ENCODE measurements at regions of chr4 and their contacts with region 1.

Region 1: GRCh38 chr4:108109997-108110416 is 58.7 kb downstream of the LEF1 start:
- DNase-seq: peak in 1 of 14 experiments; percentile 10
- ATAC-seq: no peak
- H3K4me3 ChIP-seq: peak overlapping the region; percentile 2
- H3K4me3 Mint-ChIP-seq: peak overlapping the region; percentile 73
- H3K27ac ChIP-seq: peak overlapping the region; percentile 48 to 89
- H3K27ac Mint-ChIP-seq: peak overlapping the region; percentile 92
- H3K4me1 ChIP-seq: peaks cover 85% of the 10 kb centered on the region
- H3K4me1 Mint-ChIP-seq: peaks cover 95% of the 10 kb centered on the region
- H3K27me3 ChIP-seq: no peaks in the 10 kb centered on the region
- H3K27me3 Mint-ChIP-seq: no peaks in the 10 kb centered on the region
- CTCF ChIP-seq: no peak

Region 2: GRCh38 chr4:107863850-107864371 is 246.1 kb before region 1 on chr4:
- CTCF ChIA-PET with region 1: no interaction called
- POLR2A ChIA-PET with region 1: no interaction called
- intact Hi-C with region 1: no loop called
- DNase-seq: no peak
- ATAC-seq: no peak
- H3K4me3 ChIP-seq: no peak overlapping the region
- H3K4me3 Mint-ChIP-seq: no peak overlapping the region
- H3K27ac ChIP-seq: no peak overlapping the region
- H3K27ac Mint-ChIP-seq: no peak overlapping the region
- H3K4me1 ChIP-seq: no peaks in the 10 kb centered on the region
- H3K4me1 Mint-ChIP-seq: no peaks in the 10 kb centered on the region
- H3K27me3 ChIP-seq: peaks cover 2 to 13% of the 10 kb centered on the region in 2 experiments
- H3K27me3 Mint-ChIP-seq: peaks cover 5% of the 10 kb centered on the region
- CTCF ChIP-seq: no peak

Region 3: DNA sequence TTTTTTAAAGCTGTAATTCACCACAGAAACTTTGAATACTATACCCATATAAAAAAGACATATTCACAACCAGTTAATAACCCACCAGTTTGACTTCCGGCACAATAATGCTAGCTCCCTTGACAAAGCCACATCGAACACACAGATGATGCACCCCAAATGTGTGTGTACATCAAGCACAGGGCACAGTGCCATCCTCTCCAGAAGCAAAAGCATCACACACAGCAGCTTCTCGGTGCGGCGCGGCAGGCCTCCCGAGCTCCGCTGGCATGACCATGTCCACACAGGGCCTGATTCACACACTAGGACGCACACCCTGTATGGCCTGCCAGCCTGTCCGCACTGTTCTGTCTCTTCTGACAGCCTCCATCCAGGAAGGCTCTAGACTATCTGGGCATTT is 29.3 kb before region 1 on chr4:
- CTCF ChIA-PET with region 1: interaction called, 8 read pairs
- POLR2A ChIA-PET with region 1: interaction called, 29 read pairs
- intact Hi-C with region 1: loop called (anchors 2 kb)
- DNase-seq: peak; percentile 35 to 77 (median 62)
- ATAC-seq: peak; percentile 84
- H3K4me3 ChIP-seq: no peak overlapping the region
- H3K4me3 Mint-ChIP-seq: peak overlapping the region; percentile 77
- H3K27ac ChIP-seq: peak overlapping the region in 1 of 2 donors; percentile 68
- H3K27ac Mint-ChIP-seq: peak overlapping the region; percentile 95
- H3K4me1 ChIP-seq: peaks cover 14% of the 10 kb centered on the region
- H3K4me1 Mint-ChIP-seq: peaks cover 78% of the 10 kb centered on the region
- H3K27me3 ChIP-seq: no peaks in the 10 kb centered on the region
- H3K27me3 Mint-ChIP-seq: no peaks in the 10 kb centered on the region
- CTCF ChIP-seq: no peak

Region 4: DNA sequence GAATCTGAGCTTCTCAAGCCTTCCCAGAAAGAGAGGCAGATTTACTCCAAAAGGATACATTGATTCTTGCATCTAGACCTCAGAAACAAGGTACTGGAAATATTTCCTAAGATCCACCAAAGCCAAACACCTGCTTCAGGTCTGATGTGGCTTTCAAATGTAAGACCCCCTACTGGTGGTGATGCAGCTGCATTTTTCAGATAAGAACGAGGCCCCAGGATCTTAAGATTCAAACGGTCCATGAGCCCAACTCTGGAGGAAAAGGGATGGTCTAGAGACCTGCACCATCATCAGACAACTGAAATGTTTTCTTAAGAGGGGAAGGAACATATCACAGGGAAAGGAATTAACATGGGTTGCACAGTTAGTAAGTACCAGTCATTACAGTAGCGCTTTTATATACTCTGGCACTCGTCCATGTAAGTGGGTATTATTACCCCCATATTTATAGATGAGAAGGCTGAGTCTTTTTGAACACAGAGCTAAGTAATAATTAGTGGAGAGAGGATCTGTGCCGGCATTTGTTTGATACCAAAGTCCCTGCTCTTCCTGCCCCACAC is 15.0 kb before region 1 on chr4:
- CTCF ChIA-PET with region 1: interaction called, 3 read pairs
- POLR2A ChIA-PET with region 1: interaction called, 81 read pairs
- intact Hi-C with region 1: loop called in 1 of 2 experiments (anchors 1 kb)
- DNase-seq: no peak
- ATAC-seq: peak; percentile 44
- H3K4me3 ChIP-seq: no peak overlapping the region
- H3K4me3 Mint-ChIP-seq: peak overlapping the region; percentile 67
- H3K27ac ChIP-seq: no peak overlapping the region
- H3K27ac Mint-ChIP-seq: peak overlapping the region; percentile 92
- H3K4me1 ChIP-seq: peaks cover 32% of the 10 kb centered on the region
- H3K4me1 Mint-ChIP-seq: peaks cover 94% of the 10 kb centered on the region
- H3K27me3 ChIP-seq: no peaks in the 10 kb centered on the region
- H3K27me3 Mint-ChIP-seq: no peaks in the 10 kb centered on the region
- CTCF ChIP-seq: no peak

Region 5: GRCh38 chr4:108148316-108148715 is 38.3 kb after region 1 on chr4:
- CTCF ChIA-PET with region 1: interaction called, 5 read pairs
- POLR2A ChIA-PET with region 1: interaction called, 216 read pairs
- intact Hi-C with region 1: no loop called
- DNase-seq: peak in 6 of 14 experiments; percentile 28 to 64 (median 59)
- ATAC-seq: peak; percentile 76
- H3K4me3 ChIP-seq: no peak overlapping the region
- H3K4me3 Mint-ChIP-seq: peak overlapping the region; percentile 45
- H3K27ac ChIP-seq: peak overlapping the region; percentile 4 to 73
- H3K27ac Mint-ChIP-seq: peak overlapping the region; percentile 98
- H3K4me1 ChIP-seq: peaks cover 49% of the 10 kb centered on the region
- H3K4me1 Mint-ChIP-seq: peaks cover 93% of the 10 kb centered on the region
- H3K27me3 ChIP-seq: no peaks in the 10 kb centered on the region
- H3K27me3 Mint-ChIP-seq: no peaks in the 10 kb centered on the region
- CTCF ChIP-seq: no peak

Region 6: GRCh38 chr4:108160741-108161352 is 50.8 kb after region 1 on chr4:
- CTCF ChIA-PET with region 1: interaction called, 9 read pairs
- POLR2A ChIA-PET with region 1: interaction called, 65 read pairs
- intact Hi-C with region 1: loop called in 1 of 2 experiments (anchors 10 kb)
- DNase-seq: peak in 3 of 14 experiments; percentile 54 to 60 (median 59)
- ATAC-seq: peak; percentile 45
- H3K4me3 ChIP-seq: peak overlapping the region; percentile 76
- H3K4me3 Mint-ChIP-seq: peak overlapping the region; percentile 87
- H3K27ac ChIP-seq: peak overlapping the region; percentile 7 to 36
- H3K27ac Mint-ChIP-seq: peak overlapping the region; percentile 79
- H3K4me1 ChIP-seq: peaks cover 22% of the 10 kb centered on the region
- H3K4me1 Mint-ChIP-seq: peaks cover 71% of the 10 kb centered on the region
- H3K27me3 ChIP-seq: no peaks in the 10 kb centered on the region
- H3K27me3 Mint-ChIP-seq: no peaks in the 10 kb centered on the region
- CTCF ChIP-seq: no peak